Motor neuron (in vitro differentiated cells): ENCODE measurements at regions of chr13 and their contacts with region 1.

Region 1: GRCh38 chr13:30792285-30793000 is 57.1 kb downstream of the ALOX5AP start:
- ATAC-seq: peak; percentile 91 to 99 (median 98)
- H3K4me3 ChIP-seq: no peak overlapping the region
- H3K27ac ChIP-seq: peak overlapping the region; percentile 17 to 85
- H3K4me1 ChIP-seq: peaks cover 23 to 28% of the 10 kb centered on the region in 2 donors

Region 2: GRCh38 chr13:30679483-30680330 is 112.7 kb before region 1 on chr13:
- in situ Hi-C with region 1: loop called in 2 of 9 experiments (anchors 10 to 25 kb)
- ATAC-seq: peak; percentile 59 to 97 (median 93)
- H3K4me3 ChIP-seq: no peak overlapping the region
- H3K27ac ChIP-seq: no peak overlapping the region
- H3K4me1 ChIP-seq: peaks cover 9 to 12% of the 10 kb centered on the region in 2 donors

Region 3: GRCh38 chr13:31221057-31221456 is 428.6 kb after region 1 on chr13:
- in situ Hi-C with region 1: no loop called
- ATAC-seq: no peak
- H3K4me3 ChIP-seq: no peak overlapping the region
- H3K27ac ChIP-seq: no peak overlapping the region
- H3K4me1 ChIP-seq: peaks cover 23 to 35% of the 10 kb centered on the region in 2 donors

Region 4: GRCh38 chr13:31372454-31372853 is 580.0 kb after region 1 on chr13:
- in situ Hi-C with region 1: no loop called
- ATAC-seq: no peak
- H3K4me3 ChIP-seq: no peak overlapping the region
- H3K27ac ChIP-seq: no peak overlapping the region
- H3K4me1 ChIP-seq: peaks cover 0 to 7% of the 10 kb centered on the region in 2 donors